A673 (cell line): ENCODE measurements at regions of chr3 and their contacts with region 1.

Region 1: DNA sequence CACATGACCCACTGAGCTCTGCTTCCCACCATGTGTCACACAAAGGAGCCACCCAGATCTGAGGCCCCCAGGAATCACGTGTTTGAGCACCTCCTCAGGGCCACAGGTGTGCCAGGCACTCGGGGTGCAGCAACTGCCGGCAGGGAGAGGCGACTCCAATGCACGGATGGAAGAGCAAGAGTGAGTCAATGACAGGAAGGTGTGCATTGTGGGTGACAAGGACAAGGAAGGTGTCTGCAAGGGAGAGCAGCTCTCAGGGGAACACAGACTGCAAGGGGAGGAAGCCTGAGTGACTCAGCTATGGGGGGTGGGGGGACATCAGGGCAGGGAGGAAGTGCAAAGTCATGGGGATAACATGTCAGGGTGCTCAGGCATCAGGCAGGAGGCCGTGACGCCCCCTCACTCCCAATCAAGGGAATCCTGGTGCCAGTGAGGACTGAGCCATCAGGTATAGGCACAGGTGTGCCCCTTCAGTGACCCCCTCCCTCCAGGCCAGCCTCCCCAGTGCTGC is 67.4 kb downstream of the NUP210 start:
- DNase-seq: no peak
- H3K4me3 ChIP-seq: no peak overlapping the region
- H3K27ac ChIP-seq: no peak overlapping the region
- H3K4me1 ChIP-seq: no peaks in the 10 kb centered on the region
- H3K27me3 ChIP-seq: no peaks in the 10 kb centered on the region
- CTCF ChIP-seq: no peak

Region 2: DNA sequence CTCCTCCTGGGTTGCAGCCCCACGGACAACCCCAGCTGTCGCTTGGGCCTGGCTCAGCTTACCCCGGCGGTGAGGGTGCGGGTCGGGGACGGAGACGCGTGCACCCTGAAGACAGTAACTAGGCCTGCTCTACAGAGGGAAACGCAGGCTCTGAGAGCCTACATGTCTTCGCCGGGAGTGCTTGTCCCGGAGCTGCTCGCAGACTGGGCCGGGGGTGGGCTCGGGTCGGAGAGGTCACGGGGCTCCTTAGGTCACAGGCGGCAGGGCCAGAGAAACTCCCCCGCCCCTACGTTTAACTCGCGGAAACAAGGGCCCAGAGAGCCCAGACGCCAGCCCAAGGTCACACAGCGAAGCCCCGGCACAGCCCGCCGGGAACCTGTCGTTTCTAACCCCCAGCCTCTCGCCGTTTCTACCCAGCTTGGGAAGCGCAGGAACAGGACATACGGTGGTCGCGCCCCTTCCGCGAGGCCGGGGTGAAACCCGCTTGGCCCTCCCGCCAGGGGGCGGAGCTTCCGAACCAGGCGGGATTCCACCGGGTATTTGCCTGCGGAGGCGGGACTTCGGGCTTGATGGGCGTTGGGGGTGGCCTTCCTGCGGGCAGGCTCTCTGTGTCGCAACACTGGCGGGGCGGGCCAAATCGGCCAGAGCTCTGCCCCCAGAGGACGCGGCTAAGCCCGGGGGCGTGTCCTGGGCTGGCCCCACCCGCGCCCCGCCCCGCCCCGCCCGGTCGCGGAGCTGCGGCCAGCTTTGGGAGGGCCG is 127.1 kb after region 1 on chr3 and contains the start of gene HDAC11:
- CTCF ChIA-PET with region 1: interaction called, 11 read pairs
- POLR2A ChIA-PET with region 1: no interaction called
- intact Hi-C with region 1: no loop called
- DNase-seq: peak; percentile 96
- H3K4me3 ChIP-seq: peak within 1 kb of the TSS; percentile 63
- H3K27ac ChIP-seq: peak within 1 kb of the TSS; percentile 70
- H3K4me1 ChIP-seq: no peaks in the 10 kb centered on the region
- H3K27me3 ChIP-seq: no peaks in the 10 kb centered on the region
- CTCF ChIP-seq: no peak
- total RNA-seq, gene HDAC11: 1.0 and 2.5 TPM in 2 replicates

Region 3: GRCh38 chr3:13827699-13828098 is 475.0 kb after region 1 on chr3:
- CTCF ChIA-PET with region 1: interaction called, 17 read pairs
- POLR2A ChIA-PET with region 1: no interaction called
- intact Hi-C with region 1: no loop called
- DNase-seq: no peak
- H3K4me3 ChIP-seq: no peak overlapping the region
- H3K27ac ChIP-seq: no peak overlapping the region
- H3K4me1 ChIP-seq: no peaks in the 10 kb centered on the region
- H3K27me3 ChIP-seq: no peaks in the 10 kb centered on the region
- CTCF ChIP-seq: no peak

Region 4: GRCh38 chr3:13895155-13896105 is 542.8 kb after region 1 on chr3:
- CTCF ChIA-PET with region 1: no interaction called
- POLR2A ChIA-PET with region 1: no interaction called
- intact Hi-C with region 1: no loop called
- DNase-seq: peak; percentile 94
- H3K4me3 ChIP-seq: peak overlapping the region; percentile 56
- H3K27ac ChIP-seq: no peak overlapping the region
- H3K4me1 ChIP-seq: peaks cover 4% of the 10 kb centered on the region
- H3K27me3 ChIP-seq: no peaks in the 10 kb centered on the region
- CTCF ChIP-seq: no peak